ENCODE measurements at regions of chr1 and their contacts with region 1.

Region 1: GRCh38 chr1:59971464-59971911 is 44.9 kb upstream of the CYP2J2 start:
- DNase-seq: peak in 1 of 2 experiments; percentile 90
- H3K4me3 ChIP-seq: peak overlapping the region in 3 of 4 experiments; percentile 13 to 45 (median 23); a peak in 3 of 8 replicates
- H3K27ac ChIP-seq: no peak overlapping the region
- H3K4me1 ChIP-seq: peaks cover 0 to 2% (median under 1%) of the 10 kb centered on the region in 4 experiments; a peak in 3 of 7 replicates
- H3K27me3 ChIP-seq: no peaks in the 10 kb centered on the region; a peak in 1 of 7 replicates
- CTCF ChIP-seq: peak; percentile 84 to 89 (median 87)
- EP300 ChIP-seq: no peak
- POLR2A ChIP-seq: no peak
- RAD21 ChIP-seq: peak; percentile 93 to 94

Region 2: GRCh38 chr1:59879574-59879973 is 91.9 kb before region 1 on chr1:
- CTCF ChIA-PET with region 1: interaction called, 13 read pairs
- POLR2A ChIA-PET with region 1: no interaction called
- DNase-seq: peak in 1 of 2 experiments; percentile 75
- H3K4me3 ChIP-seq: no peak overlapping the region
- H3K27ac ChIP-seq: no peak overlapping the region
- H3K4me1 ChIP-seq: no peaks in the 10 kb centered on the region
- H3K27me3 ChIP-seq: no peaks in the 10 kb centered on the region
- CTCF ChIP-seq: peak; percentile 45 to 73 (median 71)
- EP300 ChIP-seq: no peak
- POLR2A ChIP-seq: no peak
- RAD21 ChIP-seq: peak; percentile 81 to 82

Region 3: GRCh38 chr1:59947047-59947938 is 24.2 kb before region 1 on chr1:
- CTCF ChIA-PET with region 1: interaction called, 13 read pairs
- POLR2A ChIA-PET with region 1: no interaction called
- DNase-seq: peak in 1 of 2 experiments; percentile 59
- H3K4me3 ChIP-seq: no peak overlapping the region
- H3K27ac ChIP-seq: no peak overlapping the region
- H3K4me1 ChIP-seq: no peaks in the 10 kb centered on the region
- H3K27me3 ChIP-seq: no peaks in the 10 kb centered on the region
- CTCF ChIP-seq: peak; percentile 78 to 93 (median 85)
- EP300 ChIP-seq: no peak
- POLR2A ChIP-seq: no peak
- RAD21 ChIP-seq: peak; percentile 94 to 96

Region 4: DNA sequence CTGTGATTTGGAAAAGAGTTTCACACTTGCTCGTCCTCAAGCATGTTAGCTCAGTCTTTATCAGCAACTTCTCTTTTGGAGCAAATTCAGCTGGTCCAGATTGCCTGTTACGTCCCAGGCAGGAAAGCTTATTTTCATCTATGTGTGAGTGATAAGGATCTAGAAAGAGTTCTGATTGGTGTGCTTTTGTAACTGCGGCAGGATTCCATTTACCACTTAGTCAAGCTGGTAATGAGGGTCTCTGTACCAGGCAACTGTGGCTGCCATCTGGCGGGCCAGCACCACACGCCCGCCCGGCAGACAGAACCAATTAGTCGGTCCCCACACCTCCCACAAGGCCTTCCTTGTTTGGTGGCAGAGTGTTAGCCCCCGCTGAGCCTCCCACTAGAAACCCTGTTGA is 81.1 kb after region 1 on chr1:
- CTCF ChIA-PET with region 1: interaction called, 11 read pairs
- POLR2A ChIA-PET with region 1: no interaction called
- DNase-seq: no peak
- H3K4me3 ChIP-seq: no peak overlapping the region
- H3K27ac ChIP-seq: no peak overlapping the region
- H3K4me1 ChIP-seq: no peaks in the 10 kb centered on the region
- H3K27me3 ChIP-seq: no peaks in the 10 kb centered on the region
- CTCF ChIP-seq: no peak
- EP300 ChIP-seq: no peak
- POLR2A ChIP-seq: no peak
- RAD21 ChIP-seq: no peak

Region 5: DNA sequence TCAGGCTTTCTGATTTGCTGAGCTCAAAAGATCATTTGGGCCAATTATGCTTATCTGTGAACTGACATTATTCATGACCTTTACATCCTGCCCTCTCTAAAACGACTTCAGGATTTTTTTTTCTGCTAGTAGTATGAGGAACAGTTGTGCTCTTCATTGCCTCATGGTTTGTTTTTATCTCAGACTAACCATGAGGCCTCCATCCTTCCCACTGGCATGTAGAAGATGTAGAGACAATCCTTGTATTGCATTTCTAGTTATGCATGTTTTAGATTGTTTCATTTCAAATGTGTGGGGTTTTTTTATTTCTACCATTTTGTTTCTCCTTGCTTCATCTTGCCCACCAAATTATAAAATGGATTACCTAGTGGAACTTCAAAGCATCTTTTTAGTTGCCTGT is 184.9 kb after region 1 on chr1:
- CTCF ChIA-PET with region 1: interaction called, 35 read pairs
- POLR2A ChIA-PET with region 1: no interaction called
- DNase-seq: no peak
- H3K4me3 ChIP-seq: no peak overlapping the region
- H3K27ac ChIP-seq: no peak overlapping the region
- H3K4me1 ChIP-seq: no peaks in the 10 kb centered on the region
- H3K27me3 ChIP-seq: no peaks in the 10 kb centered on the region
- CTCF ChIP-seq: no peak
- EP300 ChIP-seq: no peak
- POLR2A ChIP-seq: no peak
- RAD21 ChIP-seq: no peak